ENCODE measurements at regions of chr9 and their contacts with region 1.

Region 1: DNA sequence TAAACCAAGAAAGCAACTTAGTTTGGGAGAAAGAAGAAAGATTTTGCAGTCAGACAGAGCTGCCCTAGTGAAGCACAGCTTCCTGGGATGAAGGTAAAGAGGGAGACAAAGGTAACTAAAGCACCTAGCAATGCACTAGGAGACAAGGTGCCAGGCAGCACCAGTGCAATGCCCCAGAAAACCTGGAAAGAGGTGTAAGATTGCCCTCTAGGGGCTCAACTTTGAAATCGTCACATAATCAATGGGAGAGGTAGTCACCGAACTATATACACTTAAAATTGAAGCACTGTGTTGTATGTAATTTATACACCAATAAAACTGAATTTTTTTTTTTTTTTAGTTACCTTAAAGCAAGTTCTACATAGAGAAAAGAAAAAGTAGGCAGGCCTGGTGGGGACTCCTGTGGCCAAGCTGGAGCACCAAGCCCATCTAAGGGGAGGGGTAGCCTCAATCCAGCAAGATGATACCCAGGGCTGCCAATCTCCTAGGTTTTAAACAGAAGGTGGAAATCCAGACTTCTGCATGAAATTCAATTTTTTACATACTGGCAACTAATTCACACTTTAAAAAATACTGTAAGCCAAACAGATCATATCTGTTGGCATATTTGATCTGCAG is 48.2 kb downstream of the CDK5RAP2 start:
- DNase-seq: peak; percentile 55
- ATAC-seq: peak; percentile 87 to 91
- H3K4me3 ChIP-seq: no peak overlapping the region
- H3K27ac ChIP-seq: peak overlapping the region; percentile 67 to 85; a peak in 5 of 6 replicates
- H3K4me1 ChIP-seq: peaks cover 26% of the 10 kb centered on the region
- CTCF ChIP-seq: peak; percentile 72
- EP300 ChIP-seq: no peak
- POLR2A ChIP-seq: no peak
- RAD21 ChIP-seq: peak; percentile 70 to 72

Region 2: DNA sequence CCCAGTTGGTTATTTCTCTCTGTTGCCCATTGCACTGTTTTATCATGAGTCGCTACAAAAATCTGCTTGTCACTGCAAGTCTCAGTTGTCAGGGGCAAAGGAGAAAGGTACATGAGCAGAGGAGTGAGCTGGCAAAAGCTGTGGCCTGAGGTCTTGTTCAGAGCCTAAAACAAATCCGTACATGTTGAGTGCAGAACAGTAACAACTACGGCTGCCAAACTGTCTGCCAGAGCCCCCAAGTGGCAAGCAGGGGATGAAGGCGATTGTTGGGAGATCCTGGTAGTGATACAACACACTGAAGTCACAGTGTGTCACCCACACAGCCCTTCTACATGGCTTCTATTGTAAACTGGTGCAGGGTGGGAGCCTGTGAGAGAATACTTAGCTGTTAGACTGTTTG is 1213.4 kb before region 1 on chr9:
- CTCF ChIA-PET with region 1: no interaction called
- POLR2A ChIA-PET with region 1: no interaction called
- DNase-seq: no peak
- ATAC-seq: no peak
- H3K4me3 ChIP-seq: no peak overlapping the region
- H3K27ac ChIP-seq: no peak overlapping the region
- H3K4me1 ChIP-seq: no peaks in the 10 kb centered on the region
- CTCF ChIP-seq: no peak
- EP300 ChIP-seq: no peak
- POLR2A ChIP-seq: no peak
- RAD21 ChIP-seq: no peak

Region 3: GRCh38 chr9:120545701-120546550 is 14.1 kb after region 1 on chr9:
- CTCF ChIA-PET with region 1: interaction called, 17 read pairs
- POLR2A ChIA-PET with region 1: no interaction called
- DNase-seq: no peak
- ATAC-seq: no peak
- H3K4me3 ChIP-seq: no peak overlapping the region
- H3K27ac ChIP-seq: no peak overlapping the region
- H3K4me1 ChIP-seq: no peaks in the 10 kb centered on the region
- CTCF ChIP-seq: no peak
- EP300 ChIP-seq: no peak
- POLR2A ChIP-seq: no peak
- RAD21 ChIP-seq: no peak

Measured in A549 (cell line).